WTC11 (cell line): ENCODE measurements at regions of chr1 and their contacts with region 1.

Region 1: DNA sequence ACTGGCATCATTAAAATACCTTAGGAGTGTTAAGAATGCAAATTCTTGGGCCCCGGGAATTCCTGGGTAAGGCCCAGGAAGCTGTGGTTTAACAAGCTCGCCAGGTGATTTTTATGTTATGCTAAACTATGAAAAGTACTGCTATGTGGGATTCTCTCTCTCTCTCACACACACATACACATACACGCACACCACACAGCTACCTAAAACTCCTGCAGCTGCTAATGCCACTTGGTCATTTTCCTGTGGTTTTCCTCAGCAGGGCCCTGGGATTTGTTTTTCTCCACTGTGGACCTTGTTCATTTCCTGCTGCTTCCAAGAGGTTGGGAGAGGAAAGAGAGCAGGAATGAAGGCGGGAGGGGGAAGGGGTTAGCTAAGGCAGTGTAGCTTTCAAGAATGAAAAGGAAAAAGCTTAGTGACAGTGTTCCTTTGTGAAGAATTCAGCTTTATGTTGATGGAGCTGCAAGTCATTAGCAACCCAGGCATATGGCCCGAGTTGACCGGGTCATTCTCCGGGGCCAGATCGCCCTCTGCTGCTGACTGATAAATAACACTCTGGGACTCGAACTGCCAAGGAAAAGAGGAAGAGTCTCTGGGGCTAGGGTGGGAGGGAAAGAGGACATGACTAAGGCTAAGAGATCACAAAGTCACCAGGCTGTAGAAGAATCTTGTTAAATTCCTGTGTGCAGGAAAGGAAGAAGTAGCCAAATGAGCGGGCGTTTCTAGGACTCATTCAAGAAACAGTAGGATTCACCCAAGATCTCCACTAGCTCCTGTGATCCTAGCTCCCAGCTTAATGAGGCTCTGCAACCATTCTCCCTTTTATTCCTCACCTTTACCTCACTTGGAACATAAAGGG is 30.5 kb upstream of the LRIG2 start:
- DNase-seq: peak; percentile 87
- ATAC-seq: peak; percentile 82
- H3K4me3 Mint-ChIP-seq: peak overlapping the region; percentile 45
- H3K27ac Mint-ChIP-seq: peak overlapping the region; percentile 100
- H3K4me1 Mint-ChIP-seq: peaks cover 62% of the 10 kb centered on the region
- H3K27me3 Mint-ChIP-seq: no peaks in the 10 kb centered on the region; the same call in 1 of the 2 replicates
- CTCF ChIP-seq: 0 out of 2 replicates have a peak, but pooled peaks have one; percentile 22

Region 2: DNA sequence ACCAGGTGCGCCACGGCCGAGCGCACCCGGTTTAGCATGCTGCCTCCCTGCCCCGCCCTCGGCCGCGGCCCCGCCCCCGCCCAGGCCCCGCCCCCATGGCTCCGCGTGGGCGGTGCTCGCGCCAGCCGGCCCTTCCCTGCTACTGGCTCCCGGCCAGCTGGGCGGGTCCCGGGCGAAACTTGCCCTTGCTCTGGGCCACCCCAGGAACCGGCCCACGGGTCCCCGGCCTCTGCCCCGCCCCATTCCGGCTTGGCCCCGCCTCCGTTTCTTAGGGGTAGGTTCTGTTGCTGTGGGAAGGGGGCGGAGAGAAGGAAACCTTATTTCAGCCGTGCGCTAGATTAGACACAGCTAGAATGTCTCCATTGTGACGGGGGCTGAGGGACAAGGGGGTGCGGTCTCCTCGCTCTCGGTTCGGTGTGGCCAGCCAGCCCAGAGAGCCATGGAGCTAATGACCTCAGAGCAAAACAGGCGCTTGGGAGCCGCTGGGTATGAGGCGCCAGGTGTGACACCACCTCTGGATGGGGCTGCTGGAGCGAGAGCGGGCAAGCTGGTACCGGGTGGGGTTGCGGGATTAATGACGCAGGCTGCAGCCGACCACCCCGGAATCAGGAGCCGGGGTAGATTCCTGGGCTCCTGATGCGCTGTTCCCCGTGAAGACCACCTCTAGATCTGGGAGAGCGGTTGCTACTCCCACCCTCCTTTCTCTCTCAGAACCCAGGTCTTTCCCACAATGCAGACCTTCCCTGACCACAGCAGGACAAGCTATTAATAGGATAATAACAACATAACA is 327.1 kb before region 1 on chr1 and contains the start of gene PPM1J:
- CTCF ChIA-PET with region 1: interaction called, 41 read pairs
- POLR2A ChIA-PET with region 1: interaction called, 4 read pairs
- DNase-seq: peak; percentile 100
- ATAC-seq: peak; percentile 85
- H3K4me3 Mint-ChIP-seq: peak within 1 kb of the TSS; percentile 81
- H3K27ac Mint-ChIP-seq: no peak within 1 kb of the TSS
- H3K4me1 Mint-ChIP-seq: peaks cover 50% of the 10 kb centered on the region
- H3K27me3 Mint-ChIP-seq: peaks cover 43% of the 10 kb centered on the region
- CTCF ChIP-seq: no peak
- total RNA-seq, gene PPM1J: 19.3 to 23.5 TPM (median 22.6 TPM) in 3 replicates

Region 3: DNA sequence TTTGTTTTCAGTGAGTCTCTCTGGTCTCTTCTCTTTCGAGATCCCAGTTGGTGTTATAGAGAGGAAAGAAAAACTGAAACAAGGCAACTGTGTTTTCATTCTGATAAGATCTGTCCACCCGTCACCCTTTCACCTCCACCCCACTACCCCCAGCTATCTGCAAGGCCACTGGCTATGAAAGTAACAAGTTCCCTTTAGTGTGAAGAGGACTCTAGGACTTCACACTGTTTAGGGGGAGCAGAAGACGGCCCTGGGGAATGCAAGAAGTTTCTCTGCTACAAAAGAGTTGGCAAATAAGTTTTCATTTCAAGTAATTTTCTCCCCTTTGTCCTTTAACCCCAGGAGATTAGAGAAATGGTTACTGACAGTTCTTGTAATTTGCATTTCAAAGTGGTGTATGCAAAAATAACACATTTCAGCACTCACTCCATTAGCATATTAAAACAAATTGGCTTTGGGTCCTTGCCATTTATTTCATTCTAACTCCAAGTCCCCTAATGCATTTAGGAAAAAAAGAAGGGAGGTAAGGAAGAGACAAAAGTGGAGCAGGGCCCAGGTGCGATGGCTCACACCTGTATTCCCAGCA is 247.8 kb before region 1 on chr1:
- CTCF ChIA-PET with region 1: no interaction called
- POLR2A ChIA-PET with region 1: no interaction called
- DNase-seq: no peak
- ATAC-seq: peak; percentile 52
- H3K4me3 Mint-ChIP-seq: peak overlapping the region; percentile 28
- H3K27ac Mint-ChIP-seq: peak overlapping the region; percentile 87
- H3K4me1 Mint-ChIP-seq: peaks cover 69% of the 10 kb centered on the region
- H3K27me3 Mint-ChIP-seq: peaks cover 87% of the 10 kb centered on the region
- CTCF ChIP-seq: no peak

Region 4: GRCh38 chr1:112809253-112809684 is 233.2 kb before region 1 on chr1:
- CTCF ChIA-PET with region 1: interaction called, 25 read pairs
- POLR2A ChIA-PET with region 1: interaction called, 4 read pairs
- DNase-seq: peak; percentile 91
- ATAC-seq: peak; percentile 84
- H3K4me3 Mint-ChIP-seq: peak overlapping the region; percentile 48
- H3K27ac Mint-ChIP-seq: peak overlapping the region; percentile 45
- H3K4me1 Mint-ChIP-seq: peaks cover 89% of the 10 kb centered on the region
- H3K27me3 Mint-ChIP-seq: no peaks in the 10 kb centered on the region
- CTCF ChIP-seq: peak; percentile 66

Region 5: DNA sequence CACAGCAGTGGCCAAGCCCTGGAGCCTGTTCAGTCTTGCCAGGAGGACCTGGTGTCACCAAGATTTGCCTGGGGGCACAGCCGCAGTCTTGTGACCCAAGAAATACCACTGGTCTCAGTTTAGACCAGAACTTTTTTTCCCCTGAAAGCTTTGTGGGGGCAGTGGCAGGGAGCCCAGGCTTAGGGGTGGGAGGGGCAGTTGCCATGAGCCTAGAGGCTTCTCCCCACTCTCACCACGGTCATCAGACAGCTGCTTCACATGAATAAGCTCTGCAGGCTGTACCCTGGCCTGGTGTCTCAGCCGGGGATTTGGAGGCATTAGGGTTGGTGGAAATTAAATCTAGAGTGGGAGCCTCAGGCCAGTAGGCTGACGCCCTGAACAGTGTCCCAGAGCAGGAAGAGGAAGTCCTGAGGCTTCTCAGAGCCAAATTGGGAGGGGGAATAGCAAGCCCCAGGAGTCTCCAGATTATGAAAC is 160.2 kb before region 1 on chr1:
- CTCF ChIA-PET with region 1: interaction called, 72 read pairs
- POLR2A ChIA-PET with region 1: interaction called, 4 read pairs
- DNase-seq: no peak
- ATAC-seq: no peak
- H3K4me3 Mint-ChIP-seq: no peak overlapping the region
- H3K27ac Mint-ChIP-seq: no peak overlapping the region
- H3K4me1 Mint-ChIP-seq: peaks cover 53% of the 10 kb centered on the region
- H3K27me3 Mint-ChIP-seq: no peaks in the 10 kb centered on the region
- CTCF ChIP-seq: no peak

Region 6: GRCh38 chr1:112925015-112925414 is 117.5 kb before region 1 on chr1:
- CTCF ChIA-PET with region 1: interaction called, 19 read pairs
- POLR2A ChIA-PET with region 1: no interaction called
- DNase-seq: no peak
- ATAC-seq: peak; percentile 63; the same call in 1 of the 2 replicates
- H3K4me3 Mint-ChIP-seq: no peak overlapping the region
- H3K27ac Mint-ChIP-seq: peak overlapping the region; percentile 15; the same call in 1 of the 2 replicates
- H3K4me1 Mint-ChIP-seq: peaks cover 15% of the 10 kb centered on the region
- H3K27me3 Mint-ChIP-seq: no peaks in the 10 kb centered on the region
- CTCF ChIP-seq: no peak

Region 7: GRCh38 chr1:112955781-112956543 is 86.6 kb before region 1 on chr1 and contains the start of gene SLC16A1:
- CTCF ChIA-PET with region 1: interaction called, 33 read pairs
- POLR2A ChIA-PET with region 1: interaction called, 23 read pairs
- DNase-seq: peak; percentile 82
- ATAC-seq: peak; percentile 77
- H3K4me3 Mint-ChIP-seq: peak within 1 kb of the TSS; percentile 96
- H3K27ac Mint-ChIP-seq: peak within 1 kb of the TSS; percentile 96
- H3K4me1 Mint-ChIP-seq: peaks cover 55% of the 10 kb centered on the region
- H3K27me3 Mint-ChIP-seq: no peaks in the 10 kb centered on the region
- CTCF ChIP-seq: no peak
- total RNA-seq, gene SLC16A1: 328 to 381 TPM (median 374 TPM) in 3 replicates

Region 8: DNA sequence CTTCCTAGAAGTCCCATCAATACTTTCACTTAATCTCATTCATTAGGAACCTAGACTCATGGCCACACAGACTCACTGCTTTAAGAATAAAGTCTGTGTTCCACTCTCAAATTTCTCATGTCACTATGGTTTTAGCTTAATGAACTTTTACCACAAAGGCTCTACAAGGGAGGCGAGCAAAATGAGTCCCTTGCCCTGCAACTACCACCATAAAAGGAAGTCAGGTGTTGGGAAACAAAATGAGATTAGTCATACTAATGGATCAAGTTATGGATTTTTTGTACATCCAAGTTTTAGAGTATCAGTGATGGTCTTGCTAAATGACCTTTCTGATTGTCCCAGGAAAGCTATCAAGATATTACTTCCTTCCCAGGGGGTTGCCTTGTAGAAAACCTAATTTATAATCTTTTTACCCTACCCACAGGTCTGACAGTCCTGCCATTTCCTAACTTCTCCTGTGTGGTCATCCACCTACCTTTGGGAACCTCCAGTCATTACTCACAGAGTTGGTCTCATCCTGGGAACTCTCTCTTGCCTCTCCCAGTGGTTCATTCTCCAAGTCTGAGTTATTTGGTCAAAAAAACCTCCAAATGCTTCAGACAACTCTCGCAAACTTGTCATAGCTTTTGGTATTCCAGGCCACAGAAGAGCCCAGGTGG is 34.7 kb before region 1 on chr1:
- CTCF ChIA-PET with region 1: no interaction called
- POLR2A ChIA-PET with region 1: no interaction called
- DNase-seq: no peak
- ATAC-seq: no peak
- H3K4me3 Mint-ChIP-seq: no peak overlapping the region
- H3K27ac Mint-ChIP-seq: peak overlapping the region; percentile 19; the same call in 1 of the 2 replicates
- H3K4me1 Mint-ChIP-seq: no peaks in the 10 kb centered on the region
- H3K27me3 Mint-ChIP-seq: no peaks in the 10 kb centered on the region
- CTCF ChIP-seq: no peak

Region 9: DNA sequence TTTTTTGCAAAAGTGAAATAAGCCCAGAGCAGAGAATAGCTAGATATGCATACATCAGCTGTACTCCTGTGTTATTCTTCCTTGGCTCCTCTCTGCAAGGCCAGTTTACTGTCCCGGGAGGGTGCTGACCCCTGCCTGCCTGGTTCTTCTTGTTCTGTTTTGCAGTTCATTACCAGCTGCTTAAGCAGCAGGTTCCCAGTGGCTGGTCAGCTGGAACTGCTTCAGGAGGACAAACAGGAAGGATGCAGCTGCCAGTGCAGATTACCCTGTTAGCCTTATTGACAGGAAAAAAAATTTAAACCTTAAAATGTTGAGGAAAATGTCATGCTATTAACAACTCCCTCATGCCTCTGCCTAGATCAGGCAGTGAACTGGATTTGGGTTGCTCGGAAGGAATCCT is 14.5 kb after region 1 on chr1:
- CTCF ChIA-PET with region 1: interaction called, 26 read pairs
- POLR2A ChIA-PET with region 1: interaction called, 5 read pairs
- DNase-seq: peak; percentile 36
- ATAC-seq: peak; percentile 77
- H3K4me3 Mint-ChIP-seq: no peak overlapping the region
- H3K27ac Mint-ChIP-seq: peak overlapping the region; percentile 66
- H3K4me1 Mint-ChIP-seq: peaks cover 44% of the 10 kb centered on the region
- H3K27me3 Mint-ChIP-seq: no peaks in the 10 kb centered on the region
- CTCF ChIP-seq: no peak

Region 10: GRCh38 chr1:113086541-113086940 is 44.0 kb after region 1 on chr1:
- CTCF ChIA-PET with region 1: no interaction called
- POLR2A ChIA-PET with region 1: no interaction called
- DNase-seq: no peak
- ATAC-seq: no peak
- H3K4me3 Mint-ChIP-seq: no peak overlapping the region
- H3K27ac Mint-ChIP-seq: no peak overlapping the region
- H3K4me1 Mint-ChIP-seq: no peaks in the 10 kb centered on the region
- H3K27me3 Mint-ChIP-seq: no peaks in the 10 kb centered on the region
- CTCF ChIP-seq: no peak